ENCODE measurements at regions of chr6 and their contacts with region 1.

Region 1: GRCh38 chr6:73580247-73581149 is 59.7 kb upstream of the EEF1A1 start:
- DNase-seq: peak; percentile 94
- H3K4me3 Mint-ChIP-seq: peak overlapping the region; percentile 81
- H3K27ac Mint-ChIP-seq: peak overlapping the region; percentile 100
- H3K4me1 Mint-ChIP-seq: peaks cover 9% of the 10 kb centered on the region
- H3K27me3 Mint-ChIP-seq: no peaks in the 10 kb centered on the region
- CTCF ChIP-seq: peak; percentile 17

Region 2: DNA sequence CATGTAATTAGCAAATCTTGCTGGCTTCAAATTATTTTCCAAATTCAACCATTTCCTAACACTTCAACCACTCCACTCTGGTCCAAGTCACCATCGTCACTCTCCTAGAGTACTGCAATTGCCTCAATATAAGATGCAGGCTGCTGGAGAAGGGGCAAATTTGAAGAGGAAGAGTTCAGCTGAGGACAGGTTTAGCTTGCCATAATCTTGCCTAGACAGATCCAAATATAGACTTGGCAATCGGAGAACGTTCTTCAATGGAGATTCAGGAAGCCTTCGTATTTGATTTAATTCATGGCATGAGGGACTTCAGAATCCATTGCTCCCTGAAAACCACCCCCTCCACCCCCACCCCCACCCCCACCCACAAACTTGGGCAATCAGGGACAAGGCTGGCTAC is 339.8 kb before region 1 on chr6:
- CTCF ChIA-PET with region 1: no interaction called
- POLR2A ChIA-PET with region 1: no interaction called
- intact Hi-C with region 1: no loop called
- DNase-seq: no peak
- H3K4me3 Mint-ChIP-seq: no peak overlapping the region
- H3K27ac Mint-ChIP-seq: no peak overlapping the region
- H3K4me1 Mint-ChIP-seq: no peaks in the 10 kb centered on the region
- H3K27me3 Mint-ChIP-seq: no peaks in the 10 kb centered on the region
- CTCF ChIP-seq: no peak

Region 3: GRCh38 chr6:73309769-73310502 is 270.6 kb before region 1 on chr6:
- CTCF ChIA-PET with region 1: no interaction called
- POLR2A ChIA-PET with region 1: no interaction called
- intact Hi-C with region 1: no loop called
- DNase-seq: peak; percentile 59
- H3K4me3 Mint-ChIP-seq: peak overlapping the region; percentile 98
- H3K27ac Mint-ChIP-seq: peak overlapping the region; percentile 92
- H3K4me1 Mint-ChIP-seq: peaks cover 4% of the 10 kb centered on the region
- H3K27me3 Mint-ChIP-seq: no peaks in the 10 kb centered on the region
- CTCF ChIP-seq: peak; percentile 31

Region 4: DNA sequence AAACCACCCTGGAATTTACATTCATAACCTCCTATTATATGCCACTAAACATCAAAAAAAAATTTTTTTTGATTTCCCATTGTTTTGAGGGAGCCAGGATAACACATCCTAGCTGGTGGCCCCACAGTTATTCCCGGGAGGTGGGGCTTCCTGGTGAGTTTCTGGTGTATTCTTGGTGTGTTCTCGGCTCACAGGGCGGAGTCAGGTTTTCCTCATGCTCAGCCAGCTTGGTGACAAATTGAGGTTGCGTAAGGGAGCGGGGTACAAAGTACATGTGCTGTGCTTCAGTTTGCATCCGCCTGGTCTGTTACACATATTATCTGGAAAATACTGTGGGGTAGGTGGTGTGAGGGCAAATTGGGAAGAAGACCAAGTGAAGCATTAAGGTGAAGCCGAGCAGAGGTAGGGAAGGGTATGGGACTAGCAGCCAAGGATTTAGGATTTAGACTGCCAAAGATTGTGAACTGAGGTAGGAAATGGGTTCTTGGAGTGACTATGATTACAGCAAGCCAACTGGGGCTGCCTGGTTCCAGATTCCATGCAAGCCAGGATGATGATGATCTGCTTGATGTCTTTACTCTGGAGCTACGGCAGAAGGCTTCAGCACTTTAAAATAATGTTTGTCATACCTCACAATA is 13.4 kb before region 1 on chr6:
- CTCF ChIA-PET with region 1: interaction called, 7 read pairs
- POLR2A ChIA-PET with region 1: interaction called, 55 read pairs
- intact Hi-C with region 1: no loop called
- DNase-seq: peak; percentile 88
- H3K4me3 Mint-ChIP-seq: peak overlapping the region; percentile 21
- H3K27ac Mint-ChIP-seq: peak overlapping the region; percentile 77
- H3K4me1 Mint-ChIP-seq: peaks cover 10% of the 10 kb centered on the region
- H3K27me3 Mint-ChIP-seq: no peaks in the 10 kb centered on the region
- CTCF ChIP-seq: no peak